PC-3 (cell line): ENCODE measurements at regions of chr1 and their contacts with region 1.

Region 1: DNA sequence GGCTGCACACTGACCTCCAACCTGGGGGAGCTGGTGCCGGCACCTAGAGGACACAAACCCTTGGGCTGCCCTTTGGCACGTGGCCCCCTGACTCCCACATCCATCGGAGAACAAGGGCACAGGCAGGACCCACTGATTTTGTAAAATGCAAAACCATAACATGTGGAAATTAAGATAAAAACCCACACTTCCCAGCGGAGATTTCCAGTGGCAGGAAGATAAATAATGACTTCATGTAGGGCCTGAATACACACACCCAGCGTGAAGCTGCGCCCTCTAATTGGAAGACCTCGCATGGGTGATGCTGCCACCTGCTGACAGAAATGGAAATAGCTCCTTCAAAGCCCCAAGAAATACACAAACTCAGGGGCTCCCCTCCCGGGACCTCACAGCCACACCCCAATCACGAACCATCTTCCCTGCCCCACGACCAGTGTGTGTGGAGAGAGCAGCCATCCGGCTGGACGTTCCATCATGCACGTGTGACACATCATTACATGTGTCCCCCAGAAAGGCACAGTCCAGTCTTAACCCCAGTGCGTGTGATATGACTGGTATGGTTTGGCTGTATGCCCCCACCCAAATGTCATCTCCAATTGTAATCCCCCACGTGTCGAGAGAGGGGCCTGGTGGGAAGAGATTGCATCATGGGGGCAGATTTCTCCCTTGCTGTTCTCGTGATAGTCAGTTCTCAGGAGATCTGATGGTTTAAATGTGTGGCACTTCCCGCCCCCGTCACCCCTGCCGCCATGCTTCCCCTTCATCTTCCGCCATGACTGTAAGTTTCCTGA is 5.7 kb upstream of the TPRG1L start:
- DNase-seq: peak; percentile 91
- ATAC-seq: peak; percentile 75
- H3K4me3 ChIP-seq: no peak overlapping the region
- H3K27ac ChIP-seq: no peak overlapping the region
- H3K4me1 ChIP-seq: peaks cover 26% of the 10 kb centered on the region
- H3K27me3 ChIP-seq: no peaks in the 10 kb centered on the region
- CTCF ChIP-seq: peak; percentile 95

Region 2: DNA sequence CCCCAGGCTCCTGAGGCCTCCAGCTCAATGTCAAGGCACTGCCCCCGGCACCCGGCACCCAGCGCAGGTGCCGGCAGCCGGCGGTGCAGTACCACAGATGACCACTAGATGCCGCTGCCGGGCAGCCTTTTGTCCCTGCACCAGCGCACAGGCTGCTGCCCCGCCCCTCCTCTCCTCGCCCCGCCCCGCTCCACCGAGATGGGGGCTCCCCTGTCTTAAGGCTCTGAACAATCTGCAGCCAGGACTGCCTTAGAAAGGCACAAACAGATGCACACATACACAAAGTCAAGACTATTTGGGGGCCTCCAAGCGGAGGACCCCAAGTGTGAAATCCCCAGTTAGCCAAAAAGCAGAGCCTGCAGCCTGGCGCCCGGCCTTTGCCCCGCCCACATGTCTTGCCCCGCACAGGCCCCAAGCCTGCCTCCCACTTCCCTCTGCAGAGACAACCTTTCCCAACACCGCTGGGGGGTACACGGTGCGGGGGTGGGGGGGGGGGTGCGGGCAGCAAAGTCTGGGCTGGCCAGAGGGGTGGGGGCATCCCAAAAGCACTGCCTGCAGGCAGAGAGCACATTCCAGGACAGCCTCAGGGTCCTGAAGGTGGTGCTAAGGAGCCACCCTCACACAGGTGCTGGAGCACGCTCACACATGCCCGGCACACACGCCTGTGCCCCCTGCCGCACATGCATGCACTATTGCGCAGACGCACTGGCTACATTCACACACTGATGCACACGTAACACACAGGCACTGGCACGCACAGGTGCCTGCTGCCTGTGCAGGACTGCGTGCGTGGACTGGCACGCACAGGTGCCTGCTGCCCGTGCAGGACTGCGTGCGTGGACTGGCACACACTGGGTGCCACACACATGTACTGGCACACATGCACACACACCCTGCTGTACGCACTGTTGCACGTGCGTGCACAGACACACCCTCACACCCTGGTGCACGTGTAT is 127.5 kb before region 1 on chr1:
- CTCF ChIA-PET with region 1: interaction called, 7 read pairs
- POLR2A ChIA-PET with region 1: no interaction called
- intact Hi-C with region 1: loop called (anchors 1 kb)
- DNase-seq: peak; percentile 90
- ATAC-seq: peak; percentile 61
- H3K4me3 ChIP-seq: peak overlapping the region; percentile 33; the same call in 1 of the 2 replicates
- H3K27ac ChIP-seq: no peak overlapping the region
- H3K4me1 ChIP-seq: peaks cover 27% of the 10 kb centered on the region
- H3K27me3 ChIP-seq: no peaks in the 10 kb centered on the region
- CTCF ChIP-seq: peak; percentile 98

Region 3: DNA sequence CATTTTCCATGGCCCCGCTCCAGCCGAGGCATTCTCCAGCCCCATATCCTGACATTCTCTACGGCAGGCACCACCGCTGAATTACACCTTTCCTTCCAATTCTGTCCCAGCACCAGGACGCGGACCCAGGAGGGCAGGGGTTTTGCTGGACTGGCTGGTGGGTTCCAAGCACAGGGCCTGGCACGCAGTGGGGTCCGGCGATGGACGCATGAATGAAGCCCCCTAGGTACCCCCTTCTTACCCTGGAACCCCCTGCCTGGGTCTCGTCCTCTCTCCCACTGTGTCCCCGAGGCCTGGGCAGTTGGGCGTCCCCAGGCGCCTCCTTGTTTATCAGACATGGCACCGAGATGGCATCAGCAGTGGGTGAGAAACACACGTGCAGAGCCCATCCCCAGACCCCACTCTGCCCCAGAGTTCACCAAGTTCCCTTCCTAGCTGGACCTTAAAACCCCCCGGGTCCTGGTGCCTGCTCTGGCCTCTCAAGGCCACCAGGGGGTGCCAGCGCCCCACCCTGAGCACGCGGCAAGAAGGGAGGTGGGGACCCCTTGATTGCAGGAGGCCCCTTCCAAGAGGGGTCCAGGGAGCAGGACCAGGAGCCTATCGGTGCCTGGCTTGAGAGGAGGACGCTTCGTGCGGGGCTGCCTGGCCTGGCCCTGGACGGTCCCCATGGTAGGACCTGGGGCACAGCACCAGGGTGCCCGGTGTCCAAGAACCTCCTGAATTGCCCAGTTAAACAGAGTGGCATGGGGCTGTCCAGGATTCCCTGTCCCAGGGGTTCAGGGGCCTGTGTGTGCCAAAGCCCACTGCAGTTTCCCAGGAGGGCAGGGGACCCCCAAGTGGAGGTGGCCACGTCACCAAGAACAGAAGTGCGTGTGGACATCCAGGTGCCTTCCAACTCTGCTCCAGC is 53.9 kb before region 1 on chr1:
- CTCF ChIA-PET with region 1: interaction called, 8 read pairs
- POLR2A ChIA-PET with region 1: no interaction called
- intact Hi-C with region 1: loop called (anchors 1 kb)
- DNase-seq: peak; percentile 44
- ATAC-seq: peak; percentile 63
- H3K4me3 ChIP-seq: no peak overlapping the region
- H3K27ac ChIP-seq: no peak overlapping the region
- H3K4me1 ChIP-seq: no peaks in the 10 kb centered on the region
- H3K27me3 ChIP-seq: no peaks in the 10 kb centered on the region
- CTCF ChIP-seq: peak; percentile 100

Region 4: DNA sequence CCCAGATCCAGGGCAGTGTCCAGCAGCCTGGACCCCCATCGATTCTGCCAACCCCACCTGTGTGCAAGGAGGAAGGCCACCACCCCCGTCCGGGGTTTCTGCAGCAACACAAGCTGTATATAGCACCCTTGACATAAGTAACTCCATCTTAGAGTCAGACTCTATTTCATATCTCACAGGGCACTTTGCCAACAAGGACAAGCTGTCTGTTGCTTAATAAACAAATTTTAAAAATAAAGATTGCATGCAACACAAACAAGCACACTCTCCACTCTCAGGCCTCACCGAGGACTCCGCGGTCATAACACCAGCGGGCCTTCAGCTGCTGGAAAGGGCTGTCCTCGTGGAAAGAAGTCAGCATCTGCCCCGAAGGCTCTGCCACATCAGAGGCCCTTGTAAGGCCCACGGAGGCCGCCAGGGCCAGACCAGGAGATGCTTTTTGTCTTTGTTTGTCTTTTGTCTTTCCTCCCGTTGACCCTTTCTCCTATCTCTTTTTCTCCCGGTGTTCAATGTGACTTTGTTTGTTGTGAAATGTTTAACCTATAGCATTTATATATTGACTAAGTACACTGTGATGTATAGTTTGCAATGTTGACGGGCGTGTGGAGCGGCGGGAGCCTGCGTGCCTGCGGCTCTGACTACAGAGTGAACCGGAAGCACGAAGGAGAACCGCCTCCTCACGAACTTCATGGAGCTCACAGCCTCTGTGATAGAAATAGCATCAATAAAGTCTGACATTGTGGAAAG is 32.0 kb before region 1 on chr1:
- CTCF ChIA-PET with region 1: interaction called, 29 read pairs
- POLR2A ChIA-PET with region 1: no interaction called
- intact Hi-C with region 1: loop called (anchors 1 kb)
- DNase-seq: peak; percentile 97
- ATAC-seq: peak; percentile 98
- H3K4me3 ChIP-seq: no peak overlapping the region
- H3K27ac ChIP-seq: peak overlapping the region; percentile 28
- H3K4me1 ChIP-seq: peaks cover 10% of the 10 kb centered on the region
- H3K27me3 ChIP-seq: no peaks in the 10 kb centered on the region
- CTCF ChIP-seq: no peak

Region 5: GRCh38 chr1:3663999-3664699 is 45.1 kb after region 1 on chr1:
- CTCF ChIA-PET with region 1: no interaction called
- POLR2A ChIA-PET with region 1: no interaction called
- intact Hi-C with region 1: no loop called
- DNase-seq: no peak
- ATAC-seq: no peak
- H3K4me3 ChIP-seq: no peak overlapping the region
- H3K27ac ChIP-seq: no peak overlapping the region
- H3K4me1 ChIP-seq: peaks cover 6% of the 10 kb centered on the region
- H3K27me3 ChIP-seq: peaks cover 8% of the 10 kb centered on the region; the same call in 1 of the 2 replicates
- CTCF ChIP-seq: no peak